Aorta (tissue), 5 donors: ENCODE measurements at regions of chr6 and their contacts with region 1.

Region 1: DNA sequence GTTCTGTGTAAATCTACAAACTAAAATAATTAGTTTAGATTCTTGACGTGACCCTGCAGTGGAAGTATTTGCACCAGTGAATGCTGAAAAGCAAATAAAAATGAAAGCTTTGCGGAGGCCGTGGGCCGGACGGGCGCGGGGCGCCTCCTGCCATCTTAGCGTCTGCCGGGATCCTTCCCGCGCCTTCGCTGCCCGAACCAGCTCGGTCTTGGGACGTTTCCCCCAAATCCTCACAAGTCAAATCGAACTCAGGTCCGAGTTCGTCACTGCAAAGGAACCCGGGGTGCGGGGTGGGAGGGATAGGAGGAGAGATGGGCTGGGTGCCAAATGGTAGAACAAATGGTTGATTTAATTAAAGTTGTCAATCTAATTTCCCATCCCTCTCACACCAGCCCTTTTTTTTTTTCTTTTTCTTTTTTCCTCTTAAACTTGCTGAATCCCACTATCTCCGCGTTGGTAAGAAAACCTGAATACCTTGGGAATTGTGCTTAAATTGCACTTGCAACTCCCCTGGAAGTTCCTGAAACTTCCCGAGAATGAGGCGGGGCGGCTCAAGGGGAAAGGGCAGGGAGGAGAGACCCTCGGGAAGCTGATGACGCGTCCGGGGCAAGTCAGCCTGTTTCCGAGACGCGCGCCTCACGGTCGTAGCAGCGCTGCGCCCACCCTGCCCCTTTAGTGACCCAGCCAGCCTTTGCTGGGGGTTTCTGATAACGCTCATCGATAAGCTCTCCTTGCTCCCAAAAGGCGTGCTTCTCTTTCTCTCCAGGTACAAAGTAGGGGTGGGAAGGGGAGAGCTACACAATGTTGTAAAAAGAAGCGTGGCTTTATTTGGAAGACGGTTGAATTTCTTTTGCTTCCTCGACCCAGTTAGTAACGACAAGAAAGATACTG is 1.8 kb downstream of the GJA1 start:
- DNase-seq: peak; percentile 65 to 85
- ATAC-seq: peak; percentile 80
- H3K4me3 ChIP-seq: peak overlapping the region; percentile 99 to 100
- H3K27ac ChIP-seq: peak overlapping the region; percentile 91 to 99
- H3K4me1 ChIP-seq: peaks cover 3% of the 10 kb centered on the region in 2 donors
- H3K27me3 ChIP-seq: no peaks in the 10 kb centered on the region

Region 2: GRCh38 chr6:121399966-121400365 is 37.2 kb before region 1 on chr6:
- intact Hi-C with region 1: no loop called
- DNase-seq: no peak
- ATAC-seq: no peak
- H3K4me3 ChIP-seq: no peak overlapping the region
- H3K27ac ChIP-seq: no peak overlapping the region
- H3K4me1 ChIP-seq: no peaks in the 10 kb centered on the region
- H3K27me3 ChIP-seq: no peaks in the 10 kb centered on the region

Region 3: GRCh38 chr6:121492214-121492935 is 55.2 kb after region 1 on chr6:
- intact Hi-C with region 1: loop called (anchors 2 to 10 kb)
- DNase-seq: no peak
- ATAC-seq: no peak
- H3K4me3 ChIP-seq: no peak overlapping the region
- H3K27ac ChIP-seq: peak overlapping the region; percentile 69 to 90
- H3K4me1 ChIP-seq: peaks cover 5 to 7% of the 10 kb centered on the region in 2 donors
- H3K27me3 ChIP-seq: no peaks in the 10 kb centered on the region

Region 4: DNA sequence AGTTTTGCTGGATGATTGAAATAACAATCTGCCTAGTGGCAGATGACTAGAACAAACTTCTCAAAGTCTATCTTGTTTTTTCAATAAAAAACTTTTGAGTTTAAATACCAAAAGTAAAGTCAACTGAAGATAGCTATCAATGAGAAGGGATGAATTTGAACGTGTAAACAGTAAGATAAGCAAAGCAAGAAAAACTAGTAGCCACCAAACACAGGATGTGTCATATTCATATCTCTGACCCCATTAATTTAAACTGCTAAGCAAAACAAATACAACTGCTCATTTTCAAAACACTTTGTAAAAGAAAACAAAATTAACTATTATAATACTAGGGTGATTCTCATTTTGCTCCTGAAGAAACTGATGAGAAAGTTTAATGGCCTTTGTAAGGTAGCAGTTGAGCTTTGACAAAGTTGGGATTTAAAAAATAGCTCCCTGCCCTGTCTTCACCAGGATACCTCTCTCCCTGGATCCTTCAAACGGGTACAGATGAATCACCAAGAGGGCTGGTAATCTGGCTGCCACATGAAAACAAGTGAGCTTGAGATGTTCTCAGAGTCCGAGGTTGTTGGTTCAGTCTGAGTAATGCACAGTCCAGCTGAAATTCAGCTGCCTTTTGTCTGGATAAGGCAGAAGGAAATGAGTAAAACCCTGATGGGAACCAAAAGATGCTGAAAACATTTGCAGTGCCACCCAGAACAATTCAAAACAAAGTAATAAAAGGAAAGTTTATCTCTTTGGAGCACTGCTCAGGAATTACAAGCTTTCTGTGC is 84.9 kb after region 1 on chr6:
- intact Hi-C with region 1: loop called in 1 of 2 experiments (anchors 5 kb)
- DNase-seq: no peak
- ATAC-seq: peak; percentile 85
- H3K4me3 ChIP-seq: no peak overlapping the region
- H3K27ac ChIP-seq: peak overlapping the region; percentile 96 to 100
- H3K4me1 ChIP-seq: peaks cover 5 to 15% of the 10 kb centered on the region in 2 donors
- H3K27me3 ChIP-seq: no peaks in the 10 kb centered on the region

Region 5: GRCh38 chr6:121549716-121550115 is 112.5 kb after region 1 on chr6:
- intact Hi-C with region 1: loop called in 1 of 2 experiments (anchors 5 kb)
- DNase-seq: no peak
- ATAC-seq: no peak
- H3K4me3 ChIP-seq: no peak overlapping the region
- H3K27ac ChIP-seq: peak overlapping the region; percentile 4 to 80
- H3K4me1 ChIP-seq: peaks cover 0 to 4% of the 10 kb centered on the region in 2 donors
- H3K27me3 ChIP-seq: no peaks in the 10 kb centered on the region

Region 6: GRCh38 chr6:121780325-121781313 is 343.4 kb after region 1 on chr6:
- intact Hi-C with region 1: loop called in 1 of 2 experiments (anchors 5 kb)
- DNase-seq: peak; percentile 90 to 91
- ATAC-seq: peak; percentile 86
- H3K4me3 ChIP-seq: no peak overlapping the region
- H3K27ac ChIP-seq: peak overlapping the region; percentile 20 to 94
- H3K4me1 ChIP-seq: peaks cover 3 to 5% of the 10 kb centered on the region in 2 donors
- H3K27me3 ChIP-seq: no peaks in the 10 kb centered on the region

Region 7: GRCh38 chr6:121849477-121849876 is 412.3 kb after region 1 on chr6:
- intact Hi-C with region 1: loop called in 1 of 2 experiments (anchors 5 kb)
- DNase-seq: peak in 1 of 2 donors; percentile 51
- ATAC-seq: peak; percentile 89
- H3K4me3 ChIP-seq: no peak overlapping the region
- H3K27ac ChIP-seq: no peak overlapping the region
- H3K4me1 ChIP-seq: peaks cover 1 to 4% of the 10 kb centered on the region in 2 donors
- H3K27me3 ChIP-seq: no peaks in the 10 kb centered on the region

Region 8: GRCh38 chr6:121951918-121952379 is 514.7 kb after region 1 on chr6:
- intact Hi-C with region 1: loop called (anchors 2 to 10 kb)
- DNase-seq: peak; percentile 82 to 89
- ATAC-seq: peak; percentile 90
- H3K4me3 ChIP-seq: no peak overlapping the region
- H3K27ac ChIP-seq: peak overlapping the region; percentile 73 to 97
- H3K4me1 ChIP-seq: peaks cover 2 to 4% of the 10 kb centered on the region in 2 donors
- H3K27me3 ChIP-seq: no peaks in the 10 kb centered on the region